Mammary epithelial cell (primary cell): ENCODE measurements at regions of chr15 and their contacts with region 1.

Region 1: GRCh38 chr15:75195122-75195765 is 6.4 kb upstream of the C15orf39 start:
- DNase-seq: no peak
- H3K4me3 ChIP-seq: no peak overlapping the region
- H3K27ac ChIP-seq: no peak overlapping the region
- H3K4me1 ChIP-seq: peaks cover 4% of the 10 kb centered on the region
- H3K27me3 ChIP-seq: no peaks in the 10 kb centered on the region
- CTCF ChIP-seq: no peak

Region 2: GRCh38 chr15:74365611-74366440 is 829.4 kb before region 1 on chr15:
- CTCF ChIA-PET with region 1: interaction called, 27 read pairs
- dilution Hi-C with region 1: no loop called
- in situ Hi-C with region 1: no loop called
- intact Hi-C with region 1: loop called (anchors 5 kb)
- DNase-seq: no peak
- H3K4me3 ChIP-seq: peak overlapping the region; percentile 36 to 53 (median 45)
- H3K27ac ChIP-seq: no peak overlapping the region
- H3K4me1 ChIP-seq: peaks cover 8% of the 10 kb centered on the region
- H3K27me3 ChIP-seq: peaks cover 4% of the 10 kb centered on the region
- CTCF ChIP-seq: no peak

Region 3: DNA sequence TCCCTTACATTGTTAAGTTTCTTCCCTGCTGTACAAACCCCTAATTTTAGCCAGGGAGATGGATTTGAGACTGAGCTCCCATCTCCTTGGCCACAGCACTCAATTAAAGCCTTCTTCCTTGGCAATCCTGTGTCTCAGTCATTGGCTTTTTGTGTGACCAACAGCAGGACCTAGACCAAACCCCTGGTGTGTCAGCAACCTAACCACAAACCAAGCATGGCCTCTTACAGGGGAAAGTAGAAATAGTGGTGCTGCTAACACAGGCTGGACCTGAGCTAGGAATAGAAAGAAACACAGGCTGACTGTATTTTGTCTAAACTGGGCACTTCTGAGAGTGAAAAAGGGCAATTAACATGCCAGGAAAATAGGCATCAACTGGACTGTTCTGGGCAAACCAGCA is 134.0 kb before region 1 on chr15:
- CTCF ChIA-PET with region 1: no interaction called
- dilution Hi-C with region 1: loop called (anchors 5 kb)
- in situ Hi-C with region 1: no loop called
- intact Hi-C with region 1: no loop called
- DNase-seq: peak; percentile 52
- H3K4me3 ChIP-seq: no peak overlapping the region
- H3K27ac ChIP-seq: no peak overlapping the region
- H3K4me1 ChIP-seq: peaks cover 30% of the 10 kb centered on the region
- H3K27me3 ChIP-seq: no peaks in the 10 kb centered on the region
- CTCF ChIP-seq: no peak

Region 4: GRCh38 chr15:75143738-75144334 is 51.4 kb before region 1 on chr15:
- CTCF ChIA-PET with region 1: no interaction called
- dilution Hi-C with region 1: loop called (anchors 5 kb)
- in situ Hi-C with region 1: no loop called
- intact Hi-C with region 1: no loop called
- DNase-seq: no peak
- H3K4me3 ChIP-seq: no peak overlapping the region
- H3K27ac ChIP-seq: no peak overlapping the region
- H3K4me1 ChIP-seq: peaks cover 8% of the 10 kb centered on the region
- H3K27me3 ChIP-seq: no peaks in the 10 kb centered on the region
- CTCF ChIP-seq: no peak

Region 5: GRCh38 chr15:75347222-75347878 is 152.1 kb after region 1 on chr15:
- CTCF ChIA-PET with region 1: no interaction called
- dilution Hi-C with region 1: no loop called
- in situ Hi-C with region 1: no loop called
- intact Hi-C with region 1: no loop called
- DNase-seq: no peak
- H3K4me3 ChIP-seq: peak overlapping the region; percentile 54 to 77 (median 71)
- H3K27ac ChIP-seq: no peak overlapping the region
- H3K4me1 ChIP-seq: peaks cover 18% of the 10 kb centered on the region
- H3K27me3 ChIP-seq: no peaks in the 10 kb centered on the region
- CTCF ChIP-seq: no peak